ENCODE measurements at regions of chr6 and their contacts with region 1.

Region 1: GRCh38 chr6:70884074-70884983 is 72.5 kb downstream of the B3GAT2 start:
- H3K4me3 ChIP-seq: no peak overlapping the region
- H3K27ac ChIP-seq: no peak overlapping the region
- H3K4me1 ChIP-seq: no peaks in the 10 kb centered on the region
- CTCF ChIP-seq: peak; percentile 82

Region 2: GRCh38 chr6:70520575-70520974 is 363.8 kb before region 1 on chr6:
- CTCF ChIA-PET with region 1: interaction called, 15 read pairs
- POLR2A ChIA-PET with region 1: no interaction called
- H3K4me3 ChIP-seq: no peak overlapping the region
- H3K27ac ChIP-seq: no peak overlapping the region
- H3K4me1 ChIP-seq: no peaks in the 10 kb centered on the region
- CTCF ChIP-seq: 0 out of 2 replicates have a peak, but pooled peaks have one; percentile 27

Region 3: DNA sequence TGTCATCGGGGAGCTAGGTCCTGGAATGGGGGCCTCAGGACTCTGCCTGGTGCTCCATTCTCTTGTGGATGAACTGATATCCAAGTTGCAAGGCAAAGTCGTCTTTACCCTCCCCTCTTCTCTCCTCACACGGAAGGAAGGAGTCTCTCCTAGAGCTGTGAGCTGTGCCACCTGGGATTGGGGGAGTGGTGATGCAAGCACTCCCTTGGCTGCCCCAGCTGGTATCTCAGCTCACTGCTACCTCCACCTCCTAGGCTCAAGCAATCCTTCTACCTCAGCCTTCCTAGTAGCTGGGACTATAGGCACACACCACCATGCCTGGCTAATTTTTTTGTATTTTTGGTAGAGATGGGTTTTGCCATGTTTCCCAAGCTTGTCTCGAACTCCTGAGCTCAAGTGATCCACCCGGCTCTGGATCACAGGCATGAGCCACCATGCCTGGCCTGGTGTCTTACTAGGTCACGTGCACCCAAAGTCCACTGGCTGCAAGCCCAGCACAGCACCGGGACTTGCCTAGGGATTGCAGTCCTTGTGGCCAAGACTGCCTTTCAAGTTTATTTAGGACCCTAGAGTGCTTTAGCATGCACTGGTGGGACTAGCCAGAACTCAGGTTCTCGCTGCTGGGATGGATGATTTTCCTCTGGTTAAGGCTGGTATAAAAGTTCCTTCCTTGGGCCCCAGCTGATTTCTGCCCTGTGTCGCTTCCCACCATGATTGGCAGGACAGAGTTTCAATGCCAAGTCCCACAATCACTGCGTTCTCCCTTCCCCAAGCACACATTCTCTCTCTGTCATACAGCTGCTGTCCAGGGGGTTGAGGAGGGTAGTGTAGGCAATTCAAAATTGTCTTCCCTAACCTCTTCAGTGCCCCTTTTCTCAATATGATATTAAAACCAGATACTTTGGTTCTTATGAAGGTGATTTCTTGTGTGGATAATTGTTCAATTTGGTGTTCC is 183.1 kb before region 1 on chr6:
- CTCF ChIA-PET with region 1: interaction called, 34 read pairs
- POLR2A ChIA-PET with region 1: no interaction called
- H3K4me3 ChIP-seq: no peak overlapping the region
- H3K27ac ChIP-seq: no peak overlapping the region
- H3K4me1 ChIP-seq: no peaks in the 10 kb centered on the region
- CTCF ChIP-seq: no peak

Region 4: GRCh38 chr6:70901326-70901725 is 17.0 kb after region 1 on chr6:
- CTCF ChIA-PET with region 1: interaction called, 43 read pairs
- POLR2A ChIA-PET with region 1: no interaction called
- H3K4me3 ChIP-seq: no peak overlapping the region
- H3K27ac ChIP-seq: no peak overlapping the region
- H3K4me1 ChIP-seq: no peaks in the 10 kb centered on the region
- CTCF ChIP-seq: no peak

Region 5: DNA sequence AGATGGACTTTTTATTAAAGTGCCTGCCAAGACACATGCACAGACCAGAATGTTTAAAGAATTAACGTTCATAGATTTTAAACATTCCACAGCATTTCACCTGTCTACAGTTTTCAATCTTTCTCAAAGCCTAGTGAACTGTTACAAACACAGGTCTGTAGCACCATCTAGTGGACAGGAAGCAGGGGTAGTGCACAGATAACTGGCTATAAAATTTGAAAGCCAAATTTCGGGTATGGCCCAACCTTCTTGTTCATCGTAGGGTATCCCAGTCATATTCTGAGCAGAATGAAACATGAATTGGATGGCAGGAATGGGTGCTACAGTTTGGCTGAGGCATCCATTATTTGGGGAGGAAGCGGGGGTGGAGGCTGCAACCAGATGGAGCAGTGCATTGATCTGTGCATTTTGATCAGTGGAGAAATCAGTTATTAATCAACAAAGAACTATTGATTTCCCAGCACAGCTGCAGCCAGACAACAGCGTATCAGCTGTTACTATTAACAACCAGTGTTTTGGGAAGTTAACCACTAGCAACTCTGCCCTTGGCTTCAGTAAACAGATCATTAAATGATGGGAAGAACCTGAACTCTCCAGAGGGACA is 128.6 kb after region 1 on chr6:
- CTCF ChIA-PET with region 1: interaction called, 25 read pairs
- POLR2A ChIA-PET with region 1: no interaction called
- H3K4me3 ChIP-seq: no peak overlapping the region
- H3K27ac ChIP-seq: no peak overlapping the region
- H3K4me1 ChIP-seq: no peaks in the 10 kb centered on the region
- CTCF ChIP-seq: peak; percentile 42; the same call in 1 of the 2 replicates